ENCODE measurements at regions of chr5 and their contacts with region 1.

Region 1: DNA sequence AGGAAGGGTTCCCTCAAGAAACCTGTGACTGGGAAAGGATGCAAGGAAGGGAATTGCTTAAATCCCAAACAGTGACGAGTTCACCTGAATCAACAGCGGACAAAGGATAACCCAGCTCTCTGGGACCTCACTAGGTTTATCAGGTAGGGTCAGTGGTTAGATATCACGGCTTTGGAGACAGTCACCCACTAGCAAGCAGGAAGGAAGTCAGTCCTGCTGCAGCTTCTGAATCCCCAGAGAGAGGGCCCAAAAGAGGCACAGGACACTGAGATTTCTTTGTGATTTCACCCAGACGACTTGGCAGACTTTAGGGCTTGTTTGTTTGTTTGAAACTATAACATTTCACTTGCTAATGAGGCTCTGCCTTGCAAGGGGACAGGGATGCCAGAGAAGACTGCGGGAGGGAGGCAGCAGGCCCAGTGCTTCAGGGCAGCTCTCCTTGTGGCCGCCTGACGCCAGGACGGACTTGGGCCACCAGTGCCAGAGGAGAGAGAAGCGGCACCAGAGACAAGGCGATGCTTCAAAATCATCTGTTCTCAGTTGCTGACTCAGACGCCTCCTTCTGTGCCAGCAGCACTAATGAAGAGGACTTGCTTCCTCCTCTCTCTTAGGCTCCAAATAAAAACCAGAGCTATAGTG is 275.6 kb upstream of the SLC30A5 start:
- DNase-seq: peak; percentile 36 to 83 (median 74)
- H3K4me3 ChIP-seq: peak overlapping the region in 15 of 59 donors; percentile 2 to 39 (median 13)
- H3K27ac ChIP-seq: peak overlapping the region in 58 of 59 donors; percentile 4 to 94 (median 83)
- H3K27me3 ChIP-seq: no peaks in the 10 kb centered on the region
- CTCF ChIP-seq: peak in 14 of 56 donors; percentile 8 to 42 (median 18)

Region 2: GRCh38 chr5:68745448-68745847 is 72.7 kb before region 1 on chr5:
- intact Hi-C with region 1: loop called in 1 of 2 experiments (anchors 5 kb)
- DNase-seq: peak in 4 of 10 donors; percentile 38 to 61 (median 46)
- H3K4me3 ChIP-seq: no peak overlapping the region
- H3K27ac ChIP-seq: peak overlapping the region in 48 of 59 donors; percentile 20 to 89 (median 70)
- H3K27me3 ChIP-seq: no peaks in the 10 kb centered on the region
- CTCF ChIP-seq: peak; percentile 31 to 74 (median 59)